OCI-LY7 (cell line): ENCODE measurements at regions of chr15 and their contacts with region 1.

Region 1: DNA sequence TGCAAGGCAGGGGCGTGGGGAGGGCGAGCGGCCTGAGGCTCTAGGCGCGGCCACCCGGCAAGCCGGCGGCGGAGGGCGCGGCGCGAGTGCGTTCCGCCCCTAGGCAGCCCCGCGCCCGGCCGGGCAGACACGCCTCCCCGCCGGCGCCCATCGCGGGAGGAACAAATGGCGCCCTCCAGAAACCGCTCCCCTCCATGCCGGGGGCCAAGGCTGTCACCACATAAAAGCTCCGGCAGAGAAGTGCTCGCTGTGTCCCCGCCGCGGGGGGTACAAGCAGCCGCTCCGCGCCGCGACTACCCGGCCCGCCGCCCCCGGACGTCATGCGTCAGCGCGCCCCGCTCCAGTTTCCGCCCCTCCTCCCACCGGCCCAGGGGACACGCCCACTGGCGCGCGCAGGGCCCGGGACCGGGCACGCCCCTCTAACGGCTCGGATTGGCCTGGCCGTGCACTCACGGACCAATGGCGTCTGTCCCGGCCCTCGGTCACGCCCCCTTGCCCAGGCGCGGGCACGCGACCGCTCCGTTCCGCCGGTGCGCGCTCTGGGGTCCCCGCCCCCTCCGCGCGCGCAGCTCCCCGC is 391 bp upstream of the KLF13 start:
- DNase-seq: peak; percentile 99
- H3K4me3 ChIP-seq: peak overlapping the region; percentile 81
- H3K27ac ChIP-seq: peak overlapping the region; percentile 94
- H3K4me1 ChIP-seq: peaks cover 46% of the 10 kb centered on the region
- CTCF ChIP-seq: no peak; the same call in 1 of the 2 replicates

Region 2: GRCh38 chr15:31265871-31266711 is 60.2 kb before region 1 on chr15:
- CTCF ChIA-PET with region 1: no interaction called
- POLR2A ChIA-PET with region 1: interaction called, 4 read pairs
- intact Hi-C with region 1: loop called (anchors 1 kb)
- DNase-seq: peak; percentile 95
- H3K4me3 ChIP-seq: peak overlapping the region; percentile 35
- H3K27ac ChIP-seq: peak overlapping the region; percentile 97
- H3K4me1 ChIP-seq: peaks cover 100% of the 10 kb centered on the region
- CTCF ChIP-seq: peak; percentile 58; the same call in 1 of the 2 replicates

Region 3: GRCh38 chr15:31344823-31345605 is 18.8 kb after region 1 on chr15:
- CTCF ChIA-PET with region 1: no interaction called
- POLR2A ChIA-PET with region 1: interaction called, 4 read pairs
- intact Hi-C with region 1: loop called (anchors 2 kb)
- DNase-seq: peak; percentile 39
- H3K4me3 ChIP-seq: peak overlapping the region; percentile 57
- H3K27ac ChIP-seq: peak overlapping the region; percentile 84
- H3K4me1 ChIP-seq: peaks cover 98% of the 10 kb centered on the region
- CTCF ChIP-seq: no peak

Region 4: DNA sequence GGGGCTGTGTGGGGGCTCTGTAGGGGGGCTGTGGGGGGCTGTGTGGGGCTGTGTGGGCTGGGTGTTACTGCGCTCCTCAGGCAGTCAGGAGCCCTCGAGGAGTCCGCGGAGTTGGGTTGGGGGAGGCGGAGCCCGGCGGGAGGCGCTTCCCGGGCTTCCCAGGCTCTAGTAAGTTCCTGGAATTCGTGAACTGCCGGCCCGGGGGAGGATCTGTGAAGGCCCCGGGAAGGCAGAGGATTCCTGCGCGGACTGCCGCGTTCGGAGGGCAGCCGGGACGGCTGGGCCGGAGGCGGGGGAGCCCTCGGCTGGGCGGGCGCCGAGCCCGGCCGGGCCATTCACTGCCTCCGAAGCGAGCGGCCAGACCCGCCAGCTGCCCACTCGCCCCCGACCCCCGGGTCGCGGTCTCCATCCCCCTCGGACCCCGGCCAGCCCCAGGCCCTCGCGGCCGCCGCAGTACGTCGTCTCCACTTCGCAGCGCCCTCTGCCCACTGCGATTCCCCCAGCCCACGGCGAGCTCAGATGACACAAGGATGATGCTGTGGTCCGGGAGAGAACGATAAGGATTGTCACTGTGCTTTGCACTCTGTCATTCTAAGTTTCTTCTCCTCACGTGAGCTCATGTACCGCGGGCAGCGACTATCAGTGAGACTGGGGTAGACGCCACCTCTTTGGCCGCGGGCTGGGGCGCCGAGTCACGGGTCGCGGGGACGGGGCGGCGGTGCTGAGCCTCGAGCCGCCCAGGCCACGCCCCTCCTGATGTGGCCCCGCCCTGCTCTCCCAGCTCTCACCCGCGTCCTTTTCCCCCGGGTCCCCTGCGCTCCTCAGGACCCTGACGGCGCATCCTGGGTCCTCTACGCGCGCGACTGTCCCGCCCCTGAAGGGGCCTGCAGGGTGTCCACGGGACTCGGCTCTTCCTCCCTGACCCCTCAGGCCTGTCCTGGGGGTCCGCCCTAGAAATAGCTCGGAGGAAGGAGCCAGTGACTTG is 65.7 kb after region 1 on chr15:
- CTCF ChIA-PET with region 1: no interaction called
- POLR2A ChIA-PET with region 1: no interaction called
- intact Hi-C with region 1: loop called (anchors 2 kb)
- DNase-seq: peak; percentile 71
- H3K4me3 ChIP-seq: peak overlapping the region; percentile 73
- H3K27ac ChIP-seq: no peak overlapping the region
- H3K4me1 ChIP-seq: peaks cover 23% of the 10 kb centered on the region
- CTCF ChIP-seq: no peak

Region 5: DNA sequence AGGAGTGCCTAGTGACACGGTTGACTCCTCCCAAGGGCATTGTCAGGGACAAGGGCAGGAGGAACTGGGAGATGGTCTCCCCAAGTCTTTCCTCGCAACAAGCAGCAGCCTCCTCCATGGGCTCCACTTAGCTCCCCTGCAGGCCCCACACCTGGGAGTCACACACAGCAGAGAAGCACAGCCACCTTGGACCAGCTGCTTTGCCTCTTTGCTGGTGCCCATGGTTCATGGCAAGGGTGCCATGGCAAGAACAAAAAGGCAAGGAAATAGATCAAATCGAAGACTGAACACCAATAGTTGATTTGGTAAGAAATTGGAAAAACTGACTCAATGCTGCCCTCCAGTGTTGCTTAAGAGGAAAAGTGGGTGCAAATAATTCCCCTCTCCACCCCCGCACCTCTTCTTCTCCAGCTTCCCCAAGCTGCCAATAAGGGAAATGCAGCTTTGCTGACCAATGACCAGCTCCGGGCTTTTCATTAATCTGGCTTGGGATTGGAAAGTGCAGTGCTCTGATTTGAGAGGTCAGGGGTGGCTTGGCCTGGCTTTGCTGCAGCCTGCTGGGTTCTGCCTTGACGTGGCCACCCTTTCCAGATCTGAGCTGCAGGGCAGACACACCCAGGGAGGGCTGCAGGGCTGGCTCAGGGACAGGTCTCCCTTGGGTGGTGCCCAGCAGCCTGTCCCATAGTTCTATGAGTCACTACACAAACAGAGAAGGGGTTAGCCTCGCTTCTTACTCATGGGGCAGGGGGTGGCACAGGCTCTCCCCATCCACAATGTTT is 162.4 kb after region 1 on chr15:
- CTCF ChIA-PET with region 1: no interaction called
- POLR2A ChIA-PET with region 1: interaction called, 3 read pairs
- intact Hi-C with region 1: loop called (anchors 5 kb)
- DNase-seq: peak; percentile 83
- H3K4me3 ChIP-seq: no peak overlapping the region
- H3K27ac ChIP-seq: no peak overlapping the region
- H3K4me1 ChIP-seq: peaks cover 38% of the 10 kb centered on the region
- CTCF ChIP-seq: peak; percentile 96

Region 6: GRCh38 chr15:31954374-31955172 is 628.3 kb after region 1 on chr15:
- CTCF ChIA-PET with region 1: no interaction called
- POLR2A ChIA-PET with region 1: no interaction called
- intact Hi-C with region 1: no loop called
- DNase-seq: no peak
- H3K4me3 ChIP-seq: no peak overlapping the region
- H3K27ac ChIP-seq: no peak overlapping the region
- H3K4me1 ChIP-seq: no peaks in the 10 kb centered on the region
- CTCF ChIP-seq: no peak